Mammary epithelial cell (primary cell): ENCODE measurements at regions of chr1 and their contacts with region 1.

Region 1: GRCh38 chr1:41955461-41956159 is 36.9 kb upstream of the HIVEP3 start:
- DNase-seq: peak; percentile 99
- H3K4me3 ChIP-seq: no peak overlapping the region
- H3K27ac ChIP-seq: peak overlapping the region; percentile 100
- H3K4me1 ChIP-seq: peaks cover 78% of the 10 kb centered on the region
- H3K27me3 ChIP-seq: no peaks in the 10 kb centered on the region
- CTCF ChIP-seq: no peak

Region 2: DNA sequence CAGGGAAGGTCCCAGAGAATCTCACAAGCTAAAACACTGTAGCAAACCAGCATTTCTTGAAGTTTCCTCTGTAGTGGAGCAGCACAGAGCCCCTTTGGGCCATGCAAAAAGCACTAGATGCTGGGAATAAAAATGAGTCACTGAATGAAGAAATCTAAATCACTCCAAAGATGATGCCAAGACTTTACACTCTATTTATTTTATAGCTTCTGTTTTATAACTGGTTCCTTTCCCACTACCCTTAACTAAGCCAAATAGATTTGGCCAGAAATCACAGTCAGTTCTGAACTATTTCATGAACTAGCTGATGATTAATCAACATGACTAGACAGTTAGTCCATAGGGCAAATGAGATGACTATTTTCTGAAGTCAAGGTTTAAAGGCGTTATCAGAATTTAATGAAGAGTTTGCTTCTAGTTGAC is 803.0 kb before region 1 on chr1:
- CTCF ChIA-PET with region 1: no interaction called
- dilution Hi-C with region 1: no loop called
- in situ Hi-C with region 1: no loop called
- intact Hi-C with region 1: no loop called
- DNase-seq: peak; percentile 79
- H3K4me3 ChIP-seq: no peak overlapping the region
- H3K27ac ChIP-seq: peak overlapping the region; percentile 15
- H3K4me1 ChIP-seq: peaks cover 10% of the 10 kb centered on the region
- H3K27me3 ChIP-seq: no peaks in the 10 kb centered on the region
- CTCF ChIP-seq: no peak

Region 3: DNA sequence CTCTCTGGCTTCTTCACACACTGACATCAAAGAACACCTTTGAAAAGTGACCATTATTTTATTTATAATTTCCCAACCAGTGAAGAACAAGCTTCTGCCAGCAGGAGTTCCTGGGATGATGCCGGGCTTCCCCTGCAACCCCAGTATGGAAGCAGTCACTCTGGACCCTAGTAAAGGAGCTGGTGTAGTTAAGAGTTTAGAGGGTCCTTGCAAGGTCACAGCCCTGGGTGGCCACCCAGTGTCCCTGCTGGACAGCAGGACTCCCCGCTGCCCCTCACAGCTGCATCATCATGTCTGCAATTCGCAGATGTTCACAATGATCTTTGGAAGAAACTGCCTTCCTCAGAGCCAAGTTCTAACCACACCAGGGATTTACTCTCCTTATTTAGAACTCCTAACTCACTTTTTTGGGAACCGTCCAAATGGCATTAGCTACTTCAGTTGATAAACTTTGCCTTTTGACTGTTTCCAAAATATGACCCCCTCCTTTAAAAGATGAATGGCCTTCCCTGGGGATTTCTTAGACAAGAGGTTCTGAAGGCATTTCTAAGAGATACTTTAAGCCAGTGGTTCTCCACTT is 127.5 kb before region 1 on chr1:
- CTCF ChIA-PET with region 1: no interaction called
- dilution Hi-C with region 1: no loop called
- in situ Hi-C with region 1: no loop called
- intact Hi-C with region 1: no loop called
- DNase-seq: no peak
- H3K4me3 ChIP-seq: no peak overlapping the region
- H3K27ac ChIP-seq: no peak overlapping the region
- H3K4me1 ChIP-seq: peaks cover 7% of the 10 kb centered on the region
- H3K27me3 ChIP-seq: no peaks in the 10 kb centered on the region
- CTCF ChIP-seq: no peak

Region 4: GRCh38 chr1:41891199-41891896 is 64.3 kb before region 1 on chr1:
- CTCF ChIA-PET with region 1: no interaction called
- dilution Hi-C with region 1: no loop called
- in situ Hi-C with region 1: no loop called
- intact Hi-C with region 1: loop called (anchors 2 kb)
- DNase-seq: peak; percentile 55
- H3K4me3 ChIP-seq: peak overlapping the region; percentile 0 to 30 (median 17)
- H3K27ac ChIP-seq: peak overlapping the region; percentile 64
- H3K4me1 ChIP-seq: peaks cover 33% of the 10 kb centered on the region
- H3K27me3 ChIP-seq: no peaks in the 10 kb centered on the region
- CTCF ChIP-seq: peak in 1 of 2 donors; percentile 18